ENCODE measurements at regions of chr19 and their contacts with region 1.

Region 1: GRCh38 chr19:5031231-5032100 is 62.6 kb downstream of the KDM4B start:
- DNase-seq: peak; percentile 92
- ATAC-seq: peak; percentile 87

Region 2: DNA sequence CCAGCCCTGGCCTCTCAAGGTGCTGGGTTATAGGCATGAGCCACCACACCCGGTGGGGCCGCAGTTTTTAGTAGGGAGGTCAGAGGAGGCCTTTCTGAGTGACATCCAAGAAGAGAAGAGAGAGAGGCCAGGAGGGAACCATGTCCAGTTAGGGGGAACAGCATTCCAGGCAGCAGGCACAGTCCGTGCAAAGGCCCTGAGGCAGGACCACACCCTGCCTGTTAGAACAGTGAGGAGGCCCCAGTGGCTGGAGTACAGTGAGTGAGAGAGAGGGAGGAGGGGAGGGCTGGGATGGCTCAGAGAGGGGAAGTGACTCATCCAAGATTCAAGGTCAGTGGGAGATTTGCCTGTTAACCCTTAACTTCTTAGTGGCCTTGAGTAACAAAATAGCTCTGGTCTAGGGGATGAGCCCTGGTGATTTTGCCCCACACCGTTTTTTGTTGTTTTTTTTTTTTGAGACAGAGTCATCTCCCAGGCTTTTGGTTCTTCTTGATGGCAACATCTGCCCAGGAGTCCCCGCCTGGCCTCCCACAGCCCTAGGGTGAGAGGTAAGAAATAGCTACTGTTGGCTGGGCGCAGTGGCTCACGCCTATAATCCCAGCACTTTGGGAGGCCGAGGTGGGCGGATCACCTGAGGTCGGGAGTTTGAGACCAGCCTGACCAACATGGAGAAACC is 161.3 kb before region 1 on chr19:
- intact Hi-C with region 1: loop called (anchors 10 kb)
- DNase-seq: no peak
- ATAC-seq: no peak

Region 3: DNA sequence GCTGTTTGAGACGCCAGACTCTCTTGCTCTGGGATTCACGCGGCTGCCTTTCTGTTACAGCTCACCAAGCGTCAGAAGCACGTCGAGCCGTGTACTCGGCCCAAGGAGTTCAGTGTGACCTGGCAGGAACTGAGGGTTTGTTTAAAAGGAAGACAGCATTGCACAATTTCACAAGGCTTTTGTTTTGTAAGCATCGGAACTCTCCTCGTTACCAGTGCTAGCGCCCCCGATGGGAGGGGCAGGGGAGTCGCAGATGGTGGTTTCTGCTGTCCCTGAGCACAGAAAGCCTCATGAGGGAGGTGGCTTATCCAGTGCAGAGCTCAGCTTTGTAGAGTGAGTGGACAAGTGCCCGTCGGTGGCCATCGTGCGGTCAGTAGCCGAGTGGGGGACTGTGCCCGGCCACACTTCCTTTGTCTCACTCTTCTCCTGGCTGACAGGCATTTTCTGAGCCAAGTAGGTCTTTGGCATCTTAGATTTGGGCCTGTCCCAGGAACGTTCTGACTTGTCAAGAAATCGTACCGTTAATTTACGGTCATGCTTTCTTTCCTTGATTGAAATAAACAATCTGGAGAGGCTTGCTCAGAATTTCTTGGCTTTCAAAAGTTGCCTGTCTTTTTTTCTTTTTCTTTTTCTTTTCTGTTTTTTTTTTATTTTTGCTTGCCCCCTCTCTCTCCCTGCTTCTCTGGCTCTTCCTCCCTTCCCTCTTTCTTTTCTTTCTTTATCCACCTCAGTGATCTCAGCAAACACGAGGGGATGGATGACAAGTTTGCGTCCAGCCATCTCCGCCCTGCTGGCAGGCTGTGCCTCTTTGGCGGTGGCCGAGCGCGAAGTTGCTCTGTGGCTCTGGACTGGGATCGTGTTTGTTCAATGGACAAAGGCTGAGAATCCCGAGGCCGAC is 54.8 kb before region 1 on chr19:
- intact Hi-C with region 1: loop called (anchors 10 kb)
- DNase-seq: peak; percentile 78
- ATAC-seq: peak; percentile 92

Measured in sciatic nerve (tissue), 2 donors.